ENCODE measurements at regions of chr1 and their contacts with region 1.

Region 1: GRCh38 chr1:110209715-110210603 is at the start of gene KCNC4:
- DNase-seq: peak; percentile 89
- H3K4me3 ChIP-seq: peak within 1 kb of the TSS; percentile 71
- H3K27ac ChIP-seq: peak within 1 kb of the TSS; percentile 33
- H3K4me1 ChIP-seq: peaks cover 31% of the 10 kb centered on the region
- CTCF ChIP-seq: no peak
- total RNA-seq, gene KCNC4: 3.9 and 5.6 TPM in 2 replicates

Region 2: DNA sequence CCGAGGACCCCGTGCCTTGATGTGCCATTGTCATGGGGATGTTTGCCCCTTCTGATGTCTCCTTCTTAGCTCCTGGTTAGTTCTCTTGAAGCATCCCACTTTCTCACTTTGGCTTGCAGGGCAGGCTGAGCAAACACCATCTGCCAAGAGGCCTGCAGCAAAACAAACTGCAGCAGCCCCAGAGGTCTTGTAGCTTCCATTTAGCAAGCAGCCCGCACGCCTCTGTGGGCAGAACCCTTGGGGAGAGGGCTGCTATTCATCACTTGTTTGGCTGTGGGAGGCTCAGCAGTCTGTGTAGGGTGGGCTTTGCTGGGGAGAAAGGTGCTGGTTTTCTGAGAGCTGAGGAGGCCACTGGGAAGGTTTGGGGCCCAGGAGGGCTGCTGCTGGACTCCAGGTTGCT is 56.9 kb after region 1 on chr1:
- CTCF ChIA-PET with region 1: interaction called, 3 read pairs
- POLR2A ChIA-PET with region 1: no interaction called
- intact Hi-C with region 1: loop called (anchors 1 kb)
- DNase-seq: no peak
- H3K4me3 ChIP-seq: no peak overlapping the region
- H3K27ac ChIP-seq: no peak overlapping the region
- H3K4me1 ChIP-seq: no peaks in the 10 kb centered on the region
- CTCF ChIP-seq: no peak

Region 3: DNA sequence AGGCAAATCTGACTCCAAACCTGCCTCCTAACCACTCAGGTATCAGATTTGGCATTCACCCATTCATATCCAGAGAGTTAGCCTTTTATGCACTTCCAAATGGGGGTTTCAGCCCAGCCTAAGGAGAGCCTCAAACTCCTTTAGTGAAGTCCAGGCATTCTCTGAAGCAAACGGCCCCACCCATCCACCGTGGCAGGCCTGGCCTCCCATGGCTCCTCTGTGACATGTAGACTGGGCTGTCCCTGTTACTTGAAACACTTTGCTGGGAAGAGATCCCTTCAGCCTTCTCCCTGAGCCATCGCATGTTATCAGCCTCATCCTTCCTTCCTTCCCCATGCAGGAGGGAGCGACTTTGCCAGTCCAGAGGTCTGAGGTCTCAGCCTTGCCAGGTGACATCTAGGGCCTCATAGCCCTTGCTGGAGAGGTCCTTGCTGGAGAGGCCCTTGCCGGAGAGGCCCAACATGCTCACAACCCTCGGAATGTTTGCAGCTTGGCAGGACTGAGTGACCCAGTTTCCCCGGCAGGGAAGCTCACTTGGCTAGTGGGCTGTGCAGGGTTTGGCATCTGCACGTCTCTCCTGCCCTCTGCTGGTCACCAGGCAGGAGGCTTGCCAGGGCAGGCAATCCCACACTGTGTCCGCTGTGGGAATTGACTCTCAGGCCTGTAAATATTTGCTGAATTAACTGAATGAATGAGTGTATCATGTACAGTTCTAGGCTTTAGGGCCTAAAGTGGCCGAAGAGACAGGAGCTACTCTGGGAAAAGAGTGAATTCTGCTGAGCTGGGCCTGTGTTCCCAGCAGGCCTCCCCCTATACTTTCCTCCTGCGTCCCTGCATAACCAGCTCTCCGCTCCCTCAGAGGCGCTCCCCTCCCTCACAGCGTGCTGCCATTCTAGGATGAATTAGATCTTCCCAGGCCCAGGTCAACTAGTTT is 102.5 kb after region 1 on chr1:
- CTCF ChIA-PET with region 1: interaction called, 32 read pairs
- POLR2A ChIA-PET with region 1: interaction called, 5 read pairs
- intact Hi-C with region 1: loop called (anchors 1 kb)
- DNase-seq: peak; percentile 68
- H3K4me3 ChIP-seq: no peak overlapping the region
- H3K27ac ChIP-seq: no peak overlapping the region
- H3K4me1 ChIP-seq: no peaks in the 10 kb centered on the region
- CTCF ChIP-seq: peak; percentile 87

Region 4: GRCh38 chr1:110338886-110339406 is 129.0 kb after region 1 on chr1 and contains the start of gene RBM15:
- CTCF ChIA-PET with region 1: interaction called, 15 read pairs
- POLR2A ChIA-PET with region 1: interaction called, 7 read pairs
- intact Hi-C with region 1: loop called (anchors 1 kb)
- DNase-seq: peak; percentile 100
- H3K4me3 ChIP-seq: peak within 1 kb of the TSS; percentile 93
- H3K27ac ChIP-seq: peak within 1 kb of the TSS; percentile 92
- H3K4me1 ChIP-seq: peaks cover 28% of the 10 kb centered on the region
- CTCF ChIP-seq: no peak
- total RNA-seq, gene RBM15: 221 and 231 TPM in 2 replicates

Region 5: GRCh38 chr1:110412576-110412975 is 202.6 kb after region 1 on chr1:
- CTCF ChIA-PET with region 1: interaction called, 11 read pairs
- POLR2A ChIA-PET with region 1: interaction called, 4 read pairs
- intact Hi-C with region 1: loop called (anchors 5 kb)
- DNase-seq: peak; percentile 84
- H3K4me3 ChIP-seq: no peak overlapping the region
- H3K27ac ChIP-seq: no peak overlapping the region
- H3K4me1 ChIP-seq: peaks cover 23% of the 10 kb centered on the region
- CTCF ChIP-seq: peak; percentile 95

Region 6: GRCh38 chr1:110460253-110461220 is 250.6 kb after region 1 on chr1:
- CTCF ChIA-PET with region 1: interaction called, 22 read pairs
- POLR2A ChIA-PET with region 1: interaction called, 3 read pairs
- intact Hi-C with region 1: no loop called
- DNase-seq: peak; percentile 81
- H3K4me3 ChIP-seq: no peak overlapping the region
- H3K27ac ChIP-seq: no peak overlapping the region
- H3K4me1 ChIP-seq: peaks cover 3% of the 10 kb centered on the region
- CTCF ChIP-seq: peak; percentile 96

Region 7: DNA sequence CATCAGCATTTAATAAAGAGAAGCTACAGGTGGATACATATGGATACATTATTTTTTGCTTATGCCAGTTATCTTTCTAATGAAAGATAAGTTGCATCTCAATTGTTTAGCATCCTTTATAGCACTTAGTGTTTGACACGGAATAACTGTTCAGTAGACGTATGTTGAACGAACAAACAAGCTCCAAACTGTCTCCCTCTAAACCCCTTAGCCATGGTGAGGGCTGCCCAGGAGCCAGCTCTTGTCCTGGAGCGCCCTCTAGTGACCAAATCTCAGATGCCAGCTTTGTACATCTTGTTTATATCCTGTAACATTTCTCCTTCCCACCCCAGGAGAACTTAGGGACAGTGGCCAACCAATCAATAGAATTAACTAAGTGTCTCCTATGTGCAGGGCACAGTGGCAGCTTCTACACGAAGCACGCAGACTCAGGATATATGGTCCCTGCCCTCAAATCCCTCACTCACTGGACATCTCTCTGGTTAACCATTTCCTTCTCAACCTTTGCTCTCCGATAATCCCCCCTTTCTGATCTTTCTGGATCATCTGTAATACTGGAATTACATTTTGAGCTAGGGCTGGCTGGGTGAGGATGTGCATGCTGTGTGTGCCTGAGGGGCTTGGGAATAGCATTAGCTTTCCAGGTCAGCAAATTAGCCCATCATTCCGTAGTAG is 286.1 kb after region 1 on chr1:
- CTCF ChIA-PET with region 1: no interaction called
- POLR2A ChIA-PET with region 1: no interaction called
- intact Hi-C with region 1: loop called (anchors 2 kb)
- DNase-seq: peak; percentile 77
- H3K4me3 ChIP-seq: no peak overlapping the region
- H3K27ac ChIP-seq: no peak overlapping the region
- H3K4me1 ChIP-seq: no peaks in the 10 kb centered on the region
- CTCF ChIP-seq: peak; percentile 97

Measured in OCI-LY7 (cell line).